Left ventricle myocardium superior (tissue), 1 donor: ENCODE measurements at regions of chr4 and their contacts with region 1.

Region 1: DNA sequence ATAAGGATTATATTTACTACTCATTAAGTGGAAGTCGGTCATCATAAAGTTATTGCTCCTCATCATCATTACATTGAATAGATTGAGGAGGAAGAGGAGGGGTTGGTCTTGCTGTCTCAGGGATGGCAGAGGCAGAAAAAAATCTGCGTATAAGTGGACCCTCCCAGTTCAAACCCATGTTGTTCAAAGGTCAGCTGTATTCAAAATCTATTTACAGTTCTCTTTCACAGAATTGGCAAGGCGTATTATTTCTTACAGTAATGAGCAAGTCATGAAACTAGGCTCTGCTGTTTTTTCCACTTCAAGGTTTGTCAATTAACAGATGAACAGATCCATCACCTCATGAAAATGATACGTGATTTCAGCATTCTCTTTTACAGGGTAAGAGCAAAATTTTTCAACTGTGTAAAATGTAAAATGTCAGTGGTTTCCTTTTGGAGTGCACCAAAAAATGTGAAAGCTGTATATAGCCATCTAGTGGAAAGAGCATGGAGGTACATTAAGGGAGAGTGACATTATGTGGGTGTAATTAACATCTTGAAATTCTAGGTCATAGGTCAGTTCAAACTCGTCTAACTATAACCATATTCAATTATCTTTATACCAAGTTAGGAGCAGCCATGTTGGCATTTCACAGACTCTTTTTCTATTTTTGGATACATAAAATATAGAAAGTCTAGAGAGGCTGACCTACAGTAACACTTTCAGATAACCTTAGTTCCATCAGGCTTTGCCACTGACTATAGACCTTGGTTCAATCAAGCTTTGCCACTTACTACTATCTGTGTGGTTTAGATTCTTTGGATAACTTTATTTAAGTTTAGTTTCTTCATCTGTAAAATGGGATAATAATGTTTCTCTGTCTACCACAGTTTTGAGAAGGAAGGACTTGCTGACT is 30.1 kb downstream of the NEIL3 start:
- DNase-seq: no peak
- ATAC-seq: peak; percentile 30

Region 2: GRCh38 chr4:177246641-177247584 is 92.8 kb before region 1 on chr4:
- intact Hi-C with region 1: loop called (anchors 10 kb)
- DNase-seq: no peak
- ATAC-seq: no peak